Panc1 (cell line): ENCODE measurements at regions of chr13 and their contacts with region 1.

Region 1: GRCh38 chr13:79423801-79424642 is 18.0 kb upstream of the RBM26 start:
- DNase-seq: no peak
- ATAC-seq: peak; percentile 63; the same call in 1 of the 2 replicates
- H3K4me3 ChIP-seq: no peak overlapping the region
- H3K27ac ChIP-seq: no peak overlapping the region
- H3K4me1 ChIP-seq: no peaks in the 10 kb centered on the region
- H3K27me3 ChIP-seq: no peaks in the 10 kb centered on the region
- CTCF ChIP-seq: peak; percentile 53; the same call in 1 of the 2 replicates

Region 2: GRCh38 chr13:79070343-79070974 is 353.6 kb before region 1 on chr13:
- CTCF ChIA-PET with region 1: no interaction called
- POLR2A ChIA-PET with region 1: no interaction called
- in situ Hi-C with region 1: no loop called
- intact Hi-C with region 1: no loop called
- DNase-seq: no peak
- ATAC-seq: no peak
- H3K4me3 ChIP-seq: no peak overlapping the region
- H3K27ac ChIP-seq: no peak overlapping the region
- H3K4me1 ChIP-seq: no peaks in the 10 kb centered on the region
- H3K27me3 ChIP-seq: no peaks in the 10 kb centered on the region
- CTCF ChIP-seq: no peak

Region 3: GRCh38 chr13:79508224-79508961 is 84.4 kb after region 1 on chr13:
- CTCF ChIA-PET with region 1: no interaction called
- POLR2A ChIA-PET with region 1: no interaction called
- in situ Hi-C with region 1: no loop called
- intact Hi-C with region 1: no loop called
- DNase-seq: no peak
- ATAC-seq: no peak
- H3K4me3 ChIP-seq: no peak overlapping the region
- H3K27ac ChIP-seq: no peak overlapping the region
- H3K4me1 ChIP-seq: no peaks in the 10 kb centered on the region; the same call in 1 of the 2 replicates
- H3K27me3 ChIP-seq: no peaks in the 10 kb centered on the region
- CTCF ChIP-seq: no peak

Region 4: GRCh38 chr13:79541426-79542049 is 117.5 kb after region 1 on chr13:
- CTCF ChIA-PET with region 1: interaction called, 24 read pairs
- POLR2A ChIA-PET with region 1: no interaction called
- in situ Hi-C with region 1: no loop called
- intact Hi-C with region 1: loop called (anchors 1 kb)
- DNase-seq: peak; percentile 22
- ATAC-seq: no peak
- H3K4me3 ChIP-seq: no peak overlapping the region
- H3K27ac ChIP-seq: no peak overlapping the region
- H3K4me1 ChIP-seq: no peaks in the 10 kb centered on the region
- H3K27me3 ChIP-seq: no peaks in the 10 kb centered on the region
- CTCF ChIP-seq: peak; percentile 50; the same call in 1 of the 2 replicates